Activated naive CD4-positive, alpha-beta T cell treated with anti-CD3 and anti-CD28 coated beads for 36 hours (primary cell): ENCODE measurements at regions of chr4 and their contacts with region 1.

Region 1: GRCh38 chr4:155758481-155759404 is at the start of gene GUCY1B1:
- DNase-seq: peak; percentile 77
- H3K4me3 Mint-ChIP-seq: peak within 1 kb of the TSS; percentile 57
- H3K27ac Mint-ChIP-seq: no peak within 1 kb of the TSS
- H3K4me1 Mint-ChIP-seq: peaks cover 14% of the 10 kb centered on the region
- H3K27me3 Mint-ChIP-seq: peaks cover 32% of the 10 kb centered on the region
- total RNA-seq, gene GUCY1B1: 0.60 to 0.72 TPM

Region 2: DNA sequence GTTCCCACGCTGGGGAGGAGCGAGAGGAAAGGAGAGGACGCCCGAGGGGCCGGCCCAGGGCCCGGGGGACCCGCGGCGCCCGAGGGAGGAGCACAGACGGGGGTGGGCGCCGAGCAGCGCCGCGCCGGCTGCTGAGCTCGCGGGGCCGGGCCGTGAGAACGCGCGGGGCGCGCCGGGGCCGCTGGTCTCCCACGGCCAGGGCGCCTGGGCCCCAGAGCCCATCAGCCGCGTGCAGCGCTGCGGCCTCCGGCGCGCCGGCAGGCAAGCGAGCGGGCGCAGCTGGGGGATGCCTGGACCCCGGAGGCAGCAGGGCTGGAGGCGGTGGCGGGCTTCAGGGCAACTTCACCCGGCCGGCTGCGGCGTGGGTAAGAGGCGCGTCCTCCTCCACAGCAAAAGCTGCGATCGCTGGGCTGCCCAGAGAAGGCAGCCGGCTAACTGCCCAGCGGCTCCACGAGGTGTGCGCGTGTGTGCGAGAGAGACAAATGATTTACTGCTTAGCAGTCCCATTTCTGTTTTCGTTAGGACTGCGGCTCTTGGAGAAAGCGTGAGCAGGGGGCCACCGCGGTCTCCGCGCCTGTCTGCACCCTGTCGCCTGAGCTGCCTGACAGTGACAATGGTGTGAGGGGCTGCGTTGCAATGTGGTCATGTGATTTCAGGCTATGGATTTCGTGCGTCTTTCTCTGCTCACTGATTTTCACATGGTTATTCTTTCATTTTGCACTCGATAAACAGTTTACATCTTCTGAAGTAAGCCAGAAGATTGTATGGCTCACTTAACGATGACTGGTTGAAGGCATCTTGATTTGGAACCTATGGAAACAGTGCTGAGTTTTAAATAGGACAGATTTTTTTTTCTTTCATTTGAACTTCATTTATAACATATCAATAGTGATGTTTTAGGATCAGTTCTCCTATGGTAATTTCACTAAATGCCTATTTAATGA is 90.9 kb before region 1 on chr4:
- CTCF ChIA-PET with region 1: no interaction called
- intact Hi-C with region 1: loop called (anchors 5 kb)
- DNase-seq: peak; percentile 8
- H3K4me3 Mint-ChIP-seq: peak overlapping the region; percentile 71
- H3K27ac Mint-ChIP-seq: no peak overlapping the region
- H3K4me1 Mint-ChIP-seq: peaks cover 10% of the 10 kb centered on the region
- H3K27me3 Mint-ChIP-seq: peaks cover 61% of the 10 kb centered on the region